ENCODE measurements at regions of chr6 and their contacts with region 1.

Region 1: DNA sequence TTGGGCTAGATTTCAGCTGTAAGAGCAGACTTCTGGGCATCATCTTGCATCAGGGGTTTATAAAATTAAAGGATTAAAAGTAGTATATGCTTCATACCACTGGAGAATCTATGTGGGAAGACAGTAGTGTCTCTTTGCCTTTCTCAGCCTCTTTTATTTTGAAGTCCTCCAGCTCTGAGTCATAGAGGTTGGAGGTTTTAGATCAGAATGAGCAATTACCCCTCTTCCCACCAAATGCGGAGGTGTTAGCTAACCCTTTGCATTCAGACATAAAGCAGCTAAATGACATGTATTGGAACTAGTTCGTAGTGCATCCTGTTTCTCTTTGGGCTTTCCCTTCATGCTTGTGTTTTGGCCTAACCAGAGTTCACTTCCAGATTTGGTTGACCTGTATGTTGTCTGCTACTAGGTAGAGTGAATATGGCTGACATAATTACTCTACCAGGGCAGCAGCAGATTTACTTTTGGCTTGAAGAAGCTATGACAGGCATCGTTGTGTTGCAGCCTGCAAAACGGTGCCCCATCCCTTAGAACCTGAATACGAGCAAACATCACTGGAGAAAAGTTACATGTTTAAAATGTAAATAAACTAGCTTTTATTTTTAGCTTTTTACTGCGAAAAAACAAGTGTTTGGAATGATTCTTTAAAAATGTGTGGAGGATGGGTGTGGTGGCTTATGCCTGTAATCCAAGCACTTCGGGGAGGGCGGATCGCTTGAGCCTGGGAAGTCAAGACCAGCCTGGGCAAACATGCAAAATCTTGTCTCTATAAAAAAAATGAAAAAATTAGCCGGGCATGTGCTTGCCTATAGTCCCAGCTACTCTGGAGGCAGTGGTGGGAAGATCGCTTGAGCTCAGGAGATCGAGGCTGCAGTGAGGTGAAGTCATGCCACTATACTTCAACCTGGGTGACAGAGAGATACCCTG is 82.2 kb downstream of the MYO6 start:
- DNase-seq: peak; percentile 54
- H3K4me3 Mint-ChIP-seq: no peak overlapping the region
- H3K27ac Mint-ChIP-seq: peak overlapping the region; percentile 39
- H3K4me1 Mint-ChIP-seq: peaks cover 12% of the 10 kb centered on the region
- H3K27me3 Mint-ChIP-seq: no peaks in the 10 kb centered on the region

Region 2: DNA sequence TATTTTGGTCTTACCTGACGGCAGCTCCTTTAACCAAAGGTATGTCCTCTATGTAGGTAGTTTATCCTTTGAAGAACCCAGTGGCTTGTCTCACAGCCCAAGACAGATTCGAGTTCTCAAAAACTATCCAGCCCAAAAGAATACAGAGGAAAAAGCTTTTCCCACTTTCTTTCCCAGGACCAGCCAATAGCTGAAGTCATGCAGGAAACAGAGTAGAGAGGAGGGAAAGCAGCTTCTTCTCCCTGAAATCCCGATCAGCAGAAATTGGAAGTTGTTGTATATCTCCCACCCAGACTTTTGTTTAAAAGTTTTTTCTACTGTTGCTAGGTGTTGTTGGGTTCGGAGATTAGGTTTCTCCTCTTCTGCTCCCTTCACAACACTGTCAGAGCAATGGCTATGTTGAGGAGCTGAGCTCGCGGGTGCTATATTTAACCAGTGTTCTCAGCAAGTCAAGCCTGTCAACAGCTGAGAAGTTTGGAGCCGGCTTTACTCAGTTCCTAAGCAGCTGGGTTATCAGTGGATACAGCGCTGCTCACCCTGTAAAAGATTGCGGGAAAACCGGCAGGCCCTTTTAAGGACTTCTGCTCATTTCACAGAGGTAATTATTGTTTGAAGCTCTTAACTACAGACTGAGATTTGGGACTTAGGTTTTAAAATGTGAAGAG is 337.7 kb before region 1 on chr6 and contains the start of gene FILIP1:
- CTCF ChIA-PET with region 1: no interaction called
- POLR2A ChIA-PET with region 1: no interaction called
- intact Hi-C with region 1: loop called (anchors 1 kb)
- DNase-seq: no peak
- H3K4me3 Mint-ChIP-seq: no peak within 1 kb of the TSS
- H3K27ac Mint-ChIP-seq: no peak within 1 kb of the TSS
- H3K4me1 Mint-ChIP-seq: peaks cover 11% of the 10 kb centered on the region
- H3K27me3 Mint-ChIP-seq: peaks cover 23% of the 10 kb centered on the region
- total RNA-seq, gene FILIP1: not detected

Region 3: GRCh38 chr6:75601304-75602245 is 229.6 kb before region 1 on chr6 and contains the start of gene SENP6:
- CTCF ChIA-PET with region 1: no interaction called
- POLR2A ChIA-PET with region 1: no interaction called
- intact Hi-C with region 1: loop called (anchors 1 kb)
- DNase-seq: peak; percentile 79
- H3K4me3 Mint-ChIP-seq: peak within 1 kb of the TSS; percentile 99
- H3K27ac Mint-ChIP-seq: peak within 1 kb of the TSS; percentile 98
- H3K4me1 Mint-ChIP-seq: peaks cover 60% of the 10 kb centered on the region
- H3K27me3 Mint-ChIP-seq: no peaks in the 10 kb centered on the region
- total RNA-seq, gene SENP6: 57.1 to 59.4 TPM

Region 4: GRCh38 chr6:75611702-75612375 is 219.4 kb before region 1 on chr6:
- CTCF ChIA-PET with region 1: no interaction called
- POLR2A ChIA-PET with region 1: no interaction called
- intact Hi-C with region 1: loop called (anchors 1 kb)
- DNase-seq: peak; percentile 79
- H3K4me3 Mint-ChIP-seq: peak overlapping the region; percentile 10
- H3K27ac Mint-ChIP-seq: peak overlapping the region; percentile 63
- H3K4me1 Mint-ChIP-seq: peaks cover 85% of the 10 kb centered on the region
- H3K27me3 Mint-ChIP-seq: no peaks in the 10 kb centered on the region

Region 5: GRCh38 chr6:75748743-75749501 is 82.3 kb before region 1 on chr6 and contains the start of gene MYO6:
- CTCF ChIA-PET with region 1: no interaction called
- POLR2A ChIA-PET with region 1: no interaction called
- intact Hi-C with region 1: loop called (anchors 1 kb)
- DNase-seq: peak; percentile 60
- H3K4me3 Mint-ChIP-seq: peak within 1 kb of the TSS; percentile 88
- H3K27ac Mint-ChIP-seq: no peak within 1 kb of the TSS
- H3K4me1 Mint-ChIP-seq: peaks cover 11% of the 10 kb centered on the region
- H3K27me3 Mint-ChIP-seq: peaks cover 18% of the 10 kb centered on the region
- total RNA-seq, gene MYO6: 6.1 to 6.4 TPM

Region 6: DNA sequence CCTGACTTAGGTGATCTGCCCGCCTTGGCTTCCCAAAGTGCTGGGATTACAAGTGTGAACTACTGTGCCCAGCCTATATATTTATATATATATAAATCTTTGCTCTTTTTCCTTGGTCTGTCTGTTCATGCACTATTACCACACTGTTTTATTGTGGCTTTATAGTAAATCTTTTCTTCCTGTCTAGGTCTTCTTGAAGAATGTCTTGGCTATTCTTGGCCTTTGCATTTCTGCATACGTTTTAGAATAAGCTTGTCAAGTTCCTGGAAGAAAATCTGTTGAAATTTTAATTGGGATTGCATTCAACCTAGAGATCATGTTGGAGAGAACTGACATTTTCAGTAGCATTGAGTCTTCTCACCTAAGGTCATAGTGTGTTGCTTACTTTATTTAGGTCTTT is 45.1 kb before region 1 on chr6:
- CTCF ChIA-PET with region 1: no interaction called
- POLR2A ChIA-PET with region 1: no interaction called
- intact Hi-C with region 1: loop called (anchors 1 kb)
- DNase-seq: no peak
- H3K4me3 Mint-ChIP-seq: no peak overlapping the region
- H3K27ac Mint-ChIP-seq: no peak overlapping the region
- H3K4me1 Mint-ChIP-seq: peaks cover 12% of the 10 kb centered on the region
- H3K27me3 Mint-ChIP-seq: no peaks in the 10 kb centered on the region

Measured in activated CD4-positive, alpha-beta memory T cell treated with anti-CD3 and anti-CD28 coated beads for 36 hours (primary cell).